Heart left ventricle (tissue), 16 donors: ENCODE measurements at regions of chr6 and their contacts with region 1.

Region 1: DNA sequence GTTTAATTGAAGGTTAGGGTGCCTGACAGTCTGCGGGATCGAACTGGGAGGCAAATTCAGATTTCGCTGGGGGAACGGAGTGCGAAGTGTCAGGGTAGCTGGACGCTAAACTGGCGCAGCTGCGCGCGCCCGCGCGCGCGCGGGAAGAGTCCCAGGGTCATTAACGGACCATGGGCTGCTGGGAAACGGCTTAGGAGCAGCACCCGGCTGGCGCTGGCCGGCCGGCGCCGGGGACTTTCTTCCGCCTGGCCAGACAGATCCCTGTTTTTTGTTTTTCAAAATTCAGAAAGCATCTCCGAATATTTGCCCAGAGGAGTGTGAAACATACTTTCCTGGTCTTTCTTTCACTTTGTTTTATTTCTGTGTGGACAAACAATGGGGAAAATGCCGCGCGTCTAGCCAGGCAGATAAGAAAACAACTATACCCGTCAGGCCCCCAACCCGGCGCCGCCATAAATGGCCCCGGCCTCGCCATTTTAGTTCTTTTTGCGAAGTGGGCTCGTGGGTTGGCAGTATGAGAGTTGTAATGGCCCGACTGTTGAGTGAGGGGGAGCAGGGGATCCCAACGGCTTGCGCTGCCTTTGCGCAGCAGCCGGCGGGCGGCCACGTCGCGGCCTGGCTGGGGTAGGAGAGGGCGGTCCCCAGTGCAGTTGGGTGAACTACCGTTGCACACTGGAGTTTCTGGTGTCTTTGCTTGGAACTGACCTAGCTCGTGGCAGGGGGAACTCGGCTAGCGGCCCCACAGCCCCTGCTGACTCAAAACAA is 7.1 kb downstream of the HSPA1B start:
- DNase-seq: peak; percentile 90 to 95 (median 92)
- ATAC-seq: peak; percentile 90 to 94 (median 90)
- H3K4me3 ChIP-seq: peak overlapping the region; percentile 56 to 97 (median 86)
- H3K27ac ChIP-seq: peak overlapping the region; percentile 83 to 99 (median 96)
- H3K4me1 ChIP-seq: peaks cover 4 to 71% (median 52%) of the 10 kb centered on the region in 12 donors
- H3K27me3 ChIP-seq: no peaks in the 10 kb centered on the region
- CTCF ChIP-seq: no peak
- POLR2A ChIP-seq: peak; percentile 24 to 59

Region 2: GRCh38 chr6:31541658-31542521 is 292.7 kb before region 1 on chr6 and contains the start of gene DDX39B:
- intact Hi-C with region 1: loop called in 2 of 10 experiments (anchors 5 to 10 kb)
- DNase-seq: peak; percentile 96 to 97 (median 97)
- ATAC-seq: peak; percentile 92 to 95 (median 94)
- H3K4me3 ChIP-seq: peak within 1 kb of the TSS; percentile 48 to 95 (median 79)
- H3K27ac ChIP-seq: peak within 1 kb of the TSS; percentile 90 to 99 (median 95)
- H3K4me1 ChIP-seq: peaks cover 3 to 52% (median 35%) of the 10 kb centered on the region in 12 donors
- H3K27me3 ChIP-seq: no peaks in the 10 kb centered on the region
- CTCF ChIP-seq: no peak
- POLR2A ChIP-seq: peak in 1 of 2 donors; percentile 63
- total RNA-seq, gene DDX39B: 122 to 209 (median 164) TPM

Region 3: DNA sequence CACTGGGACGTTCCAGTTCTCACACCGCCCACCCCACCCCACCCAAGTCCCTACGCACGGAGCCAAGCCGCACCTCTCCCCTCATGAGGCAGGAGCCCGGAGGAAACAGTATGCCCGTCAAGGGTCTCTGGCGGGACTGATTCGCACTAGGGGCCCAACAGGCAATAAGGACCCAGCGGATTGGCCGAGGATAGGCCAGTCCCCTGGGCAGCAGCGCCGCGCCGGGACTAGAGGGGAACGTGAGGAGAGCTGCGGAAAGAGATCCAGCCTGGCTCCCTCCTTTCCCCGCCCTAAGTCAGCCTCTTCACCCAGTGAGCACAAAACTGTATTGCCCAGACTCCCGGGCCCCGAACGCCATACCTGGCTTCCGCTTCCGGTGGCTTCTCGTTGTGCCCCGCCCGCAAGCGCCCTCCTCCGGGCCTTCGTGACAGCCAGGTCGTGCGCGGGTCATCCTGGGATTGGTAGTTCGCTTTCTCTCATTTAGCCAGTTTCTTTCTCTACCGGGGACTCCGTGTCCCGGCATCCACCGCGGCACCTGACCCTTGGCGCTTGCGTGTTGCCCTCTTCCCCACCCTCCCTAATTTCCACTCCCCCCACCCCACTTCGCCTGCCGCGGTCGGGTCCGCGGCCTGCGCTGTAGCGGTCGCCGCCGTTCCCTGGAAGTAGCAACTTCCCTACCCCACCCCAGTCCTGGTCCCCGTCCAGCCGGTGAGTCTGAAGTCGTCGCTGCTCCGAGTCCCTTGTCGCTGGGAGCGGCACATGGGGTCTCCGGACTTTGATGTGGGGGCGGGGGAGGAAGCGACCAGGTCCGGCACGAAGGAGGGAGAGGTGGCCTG is 168.9 kb before region 1 on chr6 and contains the start of gene CSNK2B:
- intact Hi-C with region 1: loop called in 2 of 10 experiments (anchors 5 kb)
- DNase-seq: peak; percentile 99
- ATAC-seq: peak; percentile 90 to 94 (median 92)
- H3K4me3 ChIP-seq: peak within 1 kb of the TSS; percentile 64 to 95 (median 83)
- H3K27ac ChIP-seq: peak within 1 kb of the TSS; percentile 83 to 97 (median 95)
- H3K4me1 ChIP-seq: peaks cover 9 to 60% (median 38%) of the 10 kb centered on the region in 12 donors
- H3K27me3 ChIP-seq: no peaks in the 10 kb centered on the region
- CTCF ChIP-seq: peak in 4 of 12 donors; percentile 18 to 41 (median 34)
- POLR2A ChIP-seq: peak in 1 of 2 donors; percentile 56
- total RNA-seq, gene CSNK2B: 111 to 323 (median 116) TPM

Region 4: DNA sequence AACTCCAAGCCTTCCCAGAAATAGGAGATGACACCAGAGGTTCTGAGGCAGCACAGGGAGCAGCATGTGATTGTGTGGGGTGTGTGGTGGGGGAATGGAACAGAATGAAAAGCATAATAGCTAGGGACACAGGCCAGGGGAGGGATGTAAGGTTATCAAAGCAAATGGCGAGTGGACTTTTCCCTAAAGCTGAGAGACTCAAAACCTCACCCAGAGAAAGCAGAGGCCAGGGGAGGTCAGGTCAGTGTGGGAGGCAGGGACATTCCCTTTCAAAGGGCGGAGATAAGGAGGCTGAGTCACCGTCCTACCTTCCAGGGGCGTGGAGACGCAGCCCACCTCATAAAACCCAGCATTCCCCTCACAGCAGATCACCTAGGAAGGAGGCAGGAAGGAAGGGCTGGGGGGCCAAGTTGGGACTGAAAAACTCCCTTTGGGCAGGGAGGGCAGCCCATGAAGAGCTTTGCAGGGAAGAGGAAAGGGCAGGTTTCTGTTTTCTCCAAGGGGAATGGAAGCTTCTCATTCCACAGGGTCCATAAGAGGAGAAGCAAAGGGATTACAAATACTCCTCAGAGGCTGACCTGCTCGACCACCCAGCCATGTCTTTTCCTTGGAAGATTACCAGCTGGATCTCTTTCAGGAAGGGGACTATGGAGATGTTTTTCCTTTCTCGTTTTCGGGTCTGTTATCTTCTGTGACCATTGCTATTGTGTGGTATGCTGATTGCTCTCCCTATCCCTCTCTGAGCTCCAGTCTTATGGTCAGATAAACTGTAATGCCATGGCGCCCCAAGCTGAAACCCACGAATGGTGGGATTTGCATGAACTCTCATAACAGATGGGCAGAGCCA is 144.2 kb before region 1 on chr6:
- intact Hi-C with region 1: no loop called
- DNase-seq: peak in 1 of 5 donors; percentile 22
- ATAC-seq: peak in 2 of 4 donors; percentile 15 to 45
- H3K4me3 ChIP-seq: no peak overlapping the region
- H3K27ac ChIP-seq: no peak overlapping the region
- H3K4me1 ChIP-seq: peaks cover 0 to 5% (median 0%) of the 10 kb centered on the region in 12 donors
- H3K27me3 ChIP-seq: no peaks in the 10 kb centered on the region
- CTCF ChIP-seq: no peak
- POLR2A ChIP-seq: no peak

Region 5: GRCh38 chr6:31702819-31703522 is 131.6 kb before region 1 on chr6 and contains the start of gene ABHD16A:
- intact Hi-C with region 1: loop called in 1 of 10 experiments (anchors 5 kb)
- DNase-seq: peak; percentile 99 to 100 (median 99)
- ATAC-seq: peak; percentile 96 to 99 (median 98)
- H3K4me3 ChIP-seq: peak within 1 kb of the TSS; percentile 58 to 99 (median 78)
- H3K27ac ChIP-seq: peak within 1 kb of the TSS; percentile 90 to 100 (median 98)
- H3K4me1 ChIP-seq: peaks cover 3 to 30% (median 21%) of the 10 kb centered on the region in 12 donors
- H3K27me3 ChIP-seq: no peaks in the 10 kb centered on the region
- CTCF ChIP-seq: peak in 2 of 12 donors; percentile 14 to 20
- POLR2A ChIP-seq: peak; percentile 88 to 98
- total RNA-seq, gene ABHD16A: 24.2 to 54.7 (median 27.4) TPM

Region 6: GRCh38 chr6:31739639-31740396 is 94.8 kb before region 1 on chr6 and contains the start of gene MSH5:
- intact Hi-C with region 1: loop called in 2 of 10 experiments (anchors 5 to 10 kb)
- DNase-seq: peak; percentile 97 to 99 (median 98)
- ATAC-seq: peak; percentile 93 to 98 (median 94)
- H3K4me3 ChIP-seq: peak within 1 kb of the TSS; percentile 40 to 89 (median 74)
- H3K27ac ChIP-seq: peak within 1 kb of the TSS in 10 of 12 donors; percentile 16 to 99 (median 62)
- H3K4me1 ChIP-seq: peaks cover 0 to 41% (median 34%) of the 10 kb centered on the region in 12 donors
- H3K27me3 ChIP-seq: no peaks in the 10 kb centered on the region
- CTCF ChIP-seq: no peak
- POLR2A ChIP-seq: peak in 1 of 2 donors; percentile 63
- total RNA-seq, gene MSH5: 0.44 to 8.4 (median 1.9) TPM

Region 7: DNA sequence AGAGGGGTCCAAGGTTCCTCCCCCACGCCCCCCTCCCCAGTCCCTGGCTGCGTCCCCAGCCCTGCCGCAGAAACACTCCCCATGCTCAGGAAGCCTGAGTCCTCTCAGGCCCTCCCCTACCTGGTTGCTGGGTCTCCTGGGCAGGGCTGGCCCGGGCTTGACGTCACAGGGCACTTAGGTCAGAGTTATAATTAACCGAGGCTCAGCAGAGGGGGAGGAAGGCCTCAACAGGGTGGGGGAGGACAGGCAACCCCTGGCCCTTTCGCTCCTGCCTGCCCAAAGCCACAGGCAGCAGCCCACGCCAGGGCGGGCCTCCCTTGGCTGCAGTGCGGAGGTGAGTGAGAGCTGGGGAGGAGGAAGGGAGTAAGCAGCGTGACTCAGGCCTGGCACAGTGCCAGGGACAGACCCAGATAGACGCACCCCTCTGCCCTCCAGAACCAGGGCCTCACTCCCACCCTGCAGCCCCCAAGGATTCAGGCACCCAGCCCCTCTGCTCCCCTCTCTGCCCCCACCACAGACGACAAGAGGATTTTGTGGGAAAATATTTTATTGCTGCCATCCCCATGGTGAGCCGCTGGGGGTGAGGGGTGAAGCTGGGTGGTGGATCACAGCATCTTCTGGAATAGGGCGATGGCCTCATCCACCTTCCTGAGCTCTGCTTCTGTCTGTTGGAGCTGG is 57.5 kb before region 1 on chr6 and contains the start of gene VWA7:
- intact Hi-C with region 1: loop called in 8 of 10 experiments (anchors 2 to 10 kb)
- DNase-seq: peak; percentile 73 to 90 (median 78)
- ATAC-seq: peak; percentile 85 to 93 (median 88)
- H3K4me3 ChIP-seq: peak within 1 kb of the TSS in 10 of 12 donors; percentile 13 to 49 (median 38)
- H3K27ac ChIP-seq: peak within 1 kb of the TSS in 11 of 12 donors; percentile 38 to 85 (median 79)
- H3K4me1 ChIP-seq: peaks cover 0 to 22% (median 13%) of the 10 kb centered on the region in 12 donors
- H3K27me3 ChIP-seq: no peaks in the 10 kb centered on the region
- CTCF ChIP-seq: no peak
- POLR2A ChIP-seq: peak in 1 of 2 donors; percentile 49
- total RNA-seq, gene VWA7: 8.0 to 25.8 (median 16.1) TPM

Region 8: DNA sequence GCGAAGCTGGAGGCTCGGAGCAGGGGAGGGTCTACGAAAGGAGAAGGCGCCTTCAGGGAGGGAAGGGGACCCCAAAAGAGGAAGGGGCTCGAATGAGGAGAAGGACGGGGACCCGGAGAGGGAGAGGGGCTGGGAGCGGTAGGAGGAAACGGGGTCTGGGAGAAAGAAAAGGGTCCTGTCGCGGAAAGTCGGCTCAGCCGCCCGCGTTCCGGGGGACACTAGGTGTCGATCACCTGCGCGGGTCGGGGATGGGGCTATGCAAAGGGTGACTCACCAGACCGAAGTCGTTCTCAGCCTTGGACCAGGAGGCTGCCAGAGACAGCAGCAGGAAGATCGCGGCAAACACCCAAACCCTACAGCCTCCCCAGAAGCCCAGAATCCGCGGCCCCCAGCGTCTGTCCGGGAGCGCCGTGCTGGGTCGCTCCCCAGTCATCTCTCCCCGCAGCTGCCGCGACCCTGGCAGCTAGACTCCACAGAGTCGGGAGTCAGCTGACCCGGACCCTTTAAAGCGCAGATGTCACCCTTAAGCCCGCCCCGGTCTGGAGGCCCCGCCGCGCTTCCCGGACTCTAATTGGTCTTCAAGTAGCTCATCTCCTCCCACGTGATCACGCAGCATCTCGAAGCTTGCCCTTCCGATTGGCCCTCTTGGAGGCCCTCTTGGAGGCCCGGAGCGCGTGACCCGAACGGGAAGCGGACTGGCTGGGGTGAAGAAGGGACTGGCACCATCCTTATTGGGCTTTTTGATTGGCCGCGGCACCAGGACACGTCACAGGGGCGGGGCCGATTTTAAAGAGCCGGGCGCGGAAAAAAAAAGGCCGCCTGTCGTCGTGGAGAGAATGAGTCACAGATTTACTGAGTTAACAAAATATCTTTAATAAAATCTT is 28.0 kb after region 1 on chr6 and contains the start of gene NEU1:
- intact Hi-C with region 1: loop called in 4 of 10 experiments (anchors 2 kb)
- DNase-seq: peak; percentile 100
- ATAC-seq: peak; percentile 98 to 99 (median 98)
- H3K4me3 ChIP-seq: peak within 1 kb of the TSS; percentile 62 to 91 (median 76)
- H3K27ac ChIP-seq: peak within 1 kb of the TSS; percentile 38 to 90 (median 84)
- H3K4me1 ChIP-seq: peaks cover 0 to 24% (median 16%) of the 10 kb centered on the region in 12 donors
- H3K27me3 ChIP-seq: no peaks in the 10 kb centered on the region
- CTCF ChIP-seq: no peak
- POLR2A ChIP-seq: peak; percentile 88 to 99
- total RNA-seq, gene NEU1: 18.7 to 39.5 (median 27.6) TPM

Region 9: GRCh38 chr6:31927242-31927862 is 92.7 kb after region 1 on chr6 and contains the start of gene C2:
- intact Hi-C with region 1: no loop called
- DNase-seq: no peak
- ATAC-seq: peak in 3 of 4 donors; percentile 24 to 31 (median 24)
- H3K4me3 ChIP-seq: peak within 1 kb of the TSS in 9 of 12 donors; percentile 15 to 56 (median 39)
- H3K27ac ChIP-seq: peak within 1 kb of the TSS in 1 of 12 donors; percentile 75
- H3K4me1 ChIP-seq: peaks cover 0 to 17% (median 0%) of the 10 kb centered on the region in 12 donors
- H3K27me3 ChIP-seq: no peaks in the 10 kb centered on the region
- CTCF ChIP-seq: no peak
- POLR2A ChIP-seq: no peak
- total RNA-seq, gene C2: 0.69 to 103 (median 5.3) TPM